Common myeloid progenitor, CD34-positive (primary cell): ENCODE measurements at regions of chr19 and their contacts with region 1.

Region 1: DNA sequence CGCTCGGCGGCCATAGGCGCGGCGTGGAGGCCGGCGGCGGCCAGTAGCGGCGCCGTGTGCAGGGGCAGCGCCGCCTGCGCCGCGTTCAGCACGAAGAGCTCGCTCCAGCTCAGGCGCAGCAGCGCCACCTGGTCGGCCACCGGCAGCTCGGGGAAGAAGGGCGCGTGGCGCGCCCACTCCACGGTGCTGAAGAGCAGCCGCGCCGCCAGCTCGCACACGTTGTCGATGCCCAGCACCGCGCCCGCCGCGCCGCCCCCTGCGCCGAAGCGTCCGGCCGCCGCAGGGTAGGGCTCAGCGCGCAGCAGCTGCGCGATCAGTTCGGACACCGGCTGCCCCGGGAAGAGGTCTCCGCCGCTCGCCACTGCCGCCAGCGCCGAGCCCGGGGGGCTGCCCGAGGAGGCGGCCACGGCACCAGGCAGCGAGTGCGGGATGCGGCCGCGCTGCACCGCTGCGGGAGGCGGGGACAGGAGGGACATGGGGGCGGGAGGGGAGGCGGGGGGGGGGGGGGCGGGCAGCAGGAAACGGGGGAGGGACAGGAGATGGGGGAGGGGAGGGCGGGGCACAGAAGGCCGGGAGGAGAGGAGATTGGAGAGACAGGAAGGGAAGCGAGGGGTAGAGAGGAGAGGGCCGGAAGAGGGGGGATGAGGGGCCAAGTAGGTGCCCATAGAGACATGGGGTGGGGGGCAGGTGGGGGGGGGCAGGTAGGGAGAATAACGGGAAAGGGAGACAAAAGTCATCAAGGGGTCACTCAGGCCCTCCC is 9.8 kb downstream of the OCEL1 start:
- DNase-seq: peak; percentile 77 to 84 (median 82)
- H3K4me3 ChIP-seq: peak overlapping the region; percentile 43 to 75 (median 60)
- H3K27ac ChIP-seq: peak overlapping the region in 1 of 2 experiments; percentile 66
- H3K4me1 ChIP-seq: peaks cover 0 to 18% (median 13%) of the 10 kb centered on the region in 4 experiments
- H3K27me3 ChIP-seq: no peaks in the 10 kb centered on the region

Region 2: DNA sequence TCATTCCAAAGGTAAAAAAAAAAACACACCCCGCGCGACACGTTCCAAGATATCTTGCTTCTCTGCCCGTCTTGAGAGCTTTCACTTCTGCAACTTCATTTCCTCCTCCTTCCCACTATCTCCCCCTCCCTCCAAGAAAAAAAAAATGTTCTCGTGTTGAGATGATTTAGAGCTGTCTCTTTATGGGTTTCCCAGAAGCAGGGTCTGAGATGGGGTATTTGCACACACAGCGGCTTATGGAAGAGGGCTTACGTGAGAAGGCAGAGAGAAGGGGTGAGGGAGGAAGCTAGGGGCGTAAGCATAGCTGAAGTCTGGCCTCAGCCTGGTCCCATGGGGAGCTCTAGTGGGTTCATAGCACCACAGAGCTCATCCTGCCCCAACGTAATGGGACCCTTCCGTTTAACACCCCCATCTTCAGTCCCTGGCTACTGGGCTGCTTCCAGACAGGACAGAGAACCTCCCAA is 51.9 kb before region 1 on chr19:
- CTCF ChIA-PET with region 1: interaction called, 10 read pairs
- POLR2A ChIA-PET with region 1: no interaction called
- DNase-seq: peak; percentile 57 to 82 (median 78)
- H3K4me3 ChIP-seq: peak overlapping the region in 6 of 7 experiments; percentile 43 to 71 (median 54)
- H3K27ac ChIP-seq: peak overlapping the region; percentile 35 to 64
- H3K4me1 ChIP-seq: peaks cover 0 to 27% (median 23%) of the 10 kb centered on the region in 4 experiments
- H3K27me3 ChIP-seq: no peaks in the 10 kb centered on the region

Region 3: GRCh38 chr19:17209126-17210036 is 26.4 kb before region 1 on chr19:
- CTCF ChIA-PET with region 1: no interaction called
- POLR2A ChIA-PET with region 1: no interaction called
- DNase-seq: peak; percentile 72 to 79 (median 73)
- H3K4me3 ChIP-seq: no peak overlapping the region
- H3K27ac ChIP-seq: no peak overlapping the region
- H3K4me1 ChIP-seq: peaks cover 0 to 2% (median 1%) of the 10 kb centered on the region in 4 experiments
- H3K27me3 ChIP-seq: no peaks in the 10 kb centered on the region